Dendritic cell treated with granulocyte-macrophage colony-stimulating factor and Interleukin-4, amounts not matched to agents 40 ng/mL and 50 ng/mL, for 4 days (primary cell): ENCODE measurements at regions of chr11 and their contacts with region 1.

Region 1: DNA sequence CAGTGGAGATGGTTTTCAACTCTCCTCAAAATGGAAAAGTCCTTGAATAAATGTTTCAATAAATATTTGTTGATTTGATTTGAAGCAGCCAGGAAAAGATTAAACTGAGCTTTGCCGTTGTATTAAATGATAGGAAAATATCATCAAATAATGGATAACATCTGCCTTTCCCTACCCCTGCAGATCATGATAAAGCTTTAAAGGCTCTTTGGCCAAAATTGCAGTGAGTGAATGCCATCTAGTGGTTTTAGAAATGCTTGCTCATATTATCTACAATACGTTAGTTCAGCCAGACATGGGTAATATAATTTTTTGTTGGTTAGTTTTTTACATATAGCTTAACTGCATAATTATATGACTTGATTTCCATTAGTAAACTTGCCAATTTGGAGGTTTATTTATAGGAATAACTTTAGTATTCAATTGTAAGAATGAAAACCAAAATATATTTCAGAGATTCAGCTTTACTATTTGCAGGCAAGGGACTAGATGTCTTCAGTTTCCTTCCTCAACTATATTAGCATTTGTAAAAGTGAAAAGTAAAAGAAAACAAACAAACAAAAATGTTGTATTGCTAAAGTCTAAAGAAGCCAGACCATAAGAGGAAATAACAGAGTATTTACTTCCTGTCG is 159.2 kb downstream of the MSANTD4 start:
- H3K4me3 Mint-ChIP-seq: no peak overlapping the region
- H3K27ac Mint-ChIP-seq: no peak overlapping the region
- H3K4me1 Mint-ChIP-seq: no peaks in the 10 kb centered on the region
- H3K27me3 Mint-ChIP-seq: peaks cover 2% of the 10 kb centered on the region

Region 2: GRCh38 chr11:103927535-103927934 is 1935.3 kb before region 1 on chr11:
- intact Hi-C with region 1: loop called (anchors 10 kb)
- H3K4me3 Mint-ChIP-seq: no peak overlapping the region
- H3K27ac Mint-ChIP-seq: no peak overlapping the region
- H3K4me1 Mint-ChIP-seq: no peaks in the 10 kb centered on the region
- H3K27me3 Mint-ChIP-seq: no peaks in the 10 kb centered on the region

Region 3: DNA sequence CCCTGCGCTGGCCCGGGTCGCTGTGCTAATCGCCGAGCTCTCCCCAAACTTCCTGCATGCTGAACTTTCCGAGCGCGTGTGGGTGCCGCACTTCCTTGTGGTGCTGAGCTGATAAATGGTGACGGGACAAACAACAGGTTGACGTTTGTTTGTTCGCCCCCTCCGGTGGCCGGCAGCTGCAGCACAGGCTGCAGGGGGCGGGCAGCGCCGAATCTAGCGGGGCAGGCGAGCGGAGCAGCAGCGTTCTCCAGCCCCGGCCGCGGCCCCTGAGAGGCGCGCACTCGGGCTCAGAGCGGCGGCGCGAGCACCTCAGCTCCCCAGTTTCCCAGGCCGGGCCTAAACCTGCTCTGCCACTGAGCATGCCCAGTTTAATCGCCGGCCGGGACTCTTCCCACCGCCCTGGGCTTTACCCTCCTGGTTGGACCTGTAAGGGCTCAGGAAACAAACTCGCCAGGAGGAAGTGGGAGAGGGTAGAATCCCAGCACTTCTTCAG is 1698.8 kb before region 1 on chr11 and contains the start of gene PDGFD:
- intact Hi-C with region 1: loop called (anchors 10 kb)
- H3K4me3 Mint-ChIP-seq: peak within 1 kb of the TSS; percentile 77
- H3K27ac Mint-ChIP-seq: no peak within 1 kb of the TSS
- H3K4me1 Mint-ChIP-seq: peaks cover 13% of the 10 kb centered on the region
- H3K27me3 Mint-ChIP-seq: peaks cover 19% of the 10 kb centered on the region

Region 4: GRCh38 chr11:104254347-104254746 is 1608.5 kb before region 1 on chr11:
- intact Hi-C with region 1: loop called (anchors 2 kb)
- H3K4me3 Mint-ChIP-seq: no peak overlapping the region
- H3K27ac Mint-ChIP-seq: no peak overlapping the region
- H3K4me1 Mint-ChIP-seq: no peaks in the 10 kb centered on the region
- H3K27me3 Mint-ChIP-seq: no peaks in the 10 kb centered on the region

Region 5: DNA sequence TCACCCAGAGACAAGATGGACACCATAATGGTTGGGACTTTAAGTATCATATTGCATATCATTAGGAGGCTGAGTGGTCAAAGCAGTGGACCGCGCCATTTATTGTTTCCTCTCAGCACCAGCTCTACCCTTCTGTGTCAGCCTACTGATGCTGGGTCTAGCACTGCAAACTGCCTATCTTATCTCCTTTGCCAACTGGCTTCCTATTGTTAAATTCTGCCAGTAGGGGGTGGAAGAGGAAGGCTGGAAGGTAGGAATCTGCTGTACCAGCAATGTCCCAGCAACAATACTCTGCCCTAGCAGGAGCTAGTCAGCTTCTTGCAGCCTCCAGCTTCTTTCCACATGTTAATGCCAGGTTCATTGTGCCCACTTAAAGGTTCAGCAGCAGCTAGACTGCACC is 1331.8 kb before region 1 on chr11:
- intact Hi-C with region 1: loop called (anchors 5 kb)
- H3K4me3 Mint-ChIP-seq: no peak overlapping the region
- H3K27ac Mint-ChIP-seq: no peak overlapping the region
- H3K4me1 Mint-ChIP-seq: peaks cover 18% of the 10 kb centered on the region
- H3K27me3 Mint-ChIP-seq: no peaks in the 10 kb centered on the region

Region 6: DNA sequence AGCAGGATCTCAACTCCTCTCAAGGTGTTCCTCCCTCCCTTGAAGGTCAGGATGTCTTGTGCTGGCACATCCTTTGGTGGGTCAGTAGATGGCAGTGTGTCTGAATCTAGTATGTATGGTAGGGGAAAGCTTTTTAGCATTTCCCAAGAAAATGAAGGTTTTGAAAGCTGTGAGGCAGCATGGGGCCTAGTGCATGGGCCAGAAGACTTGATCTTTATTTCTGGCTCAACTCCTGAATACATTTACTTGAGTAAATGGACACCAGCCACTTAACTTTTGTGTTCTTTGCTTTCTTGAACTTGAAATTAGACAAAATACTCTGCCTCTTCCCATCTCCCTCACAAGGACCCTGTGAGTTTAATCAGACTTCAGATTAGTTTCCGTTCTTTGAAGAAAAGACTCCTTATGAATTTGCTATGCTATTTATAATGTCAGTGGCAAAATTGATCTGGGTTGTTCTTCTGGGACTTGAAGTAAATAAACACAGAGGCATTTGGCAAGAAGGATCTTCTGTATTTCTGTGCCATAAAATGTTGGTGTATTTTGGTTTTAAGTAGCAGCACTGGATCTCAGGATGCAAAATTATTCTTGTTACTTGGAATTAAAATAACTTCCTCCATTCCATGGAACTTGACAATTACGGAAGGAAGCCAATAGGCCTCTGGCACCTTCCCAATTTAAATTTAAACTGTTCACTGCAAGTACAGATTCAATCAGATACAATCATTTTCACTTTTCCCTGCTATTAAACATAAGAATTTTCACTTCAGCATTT is 1253.4 kb before region 1 on chr11:
- intact Hi-C with region 1: loop called (anchors 10 kb)
- H3K4me3 Mint-ChIP-seq: no peak overlapping the region
- H3K27ac Mint-ChIP-seq: peak overlapping the region; percentile 83
- H3K4me1 Mint-ChIP-seq: peaks cover 15% of the 10 kb centered on the region
- H3K27me3 Mint-ChIP-seq: no peaks in the 10 kb centered on the region

Region 7: GRCh38 chr11:104823638-104824037 is 1039.2 kb before region 1 on chr11:
- intact Hi-C with region 1: loop called (anchors 10 kb)
- H3K4me3 Mint-ChIP-seq: no peak overlapping the region
- H3K27ac Mint-ChIP-seq: no peak overlapping the region
- H3K4me1 Mint-ChIP-seq: peaks cover 5% of the 10 kb centered on the region
- H3K27me3 Mint-ChIP-seq: no peaks in the 10 kb centered on the region